ENCODE measurements at regions of chr7 and their contacts with region 1.

Region 1: GRCh38 chr7:148503875-148504487 is 86.6 kb upstream of the C7orf33 start:
- DNase-seq: no peak
- H3K4me3 Mint-ChIP-seq: no peak overlapping the region
- H3K27ac Mint-ChIP-seq: no peak overlapping the region
- H3K4me1 Mint-ChIP-seq: peaks cover 29% of the 10 kb centered on the region
- H3K27me3 Mint-ChIP-seq: peaks cover 28% of the 10 kb centered on the region

Region 2: DNA sequence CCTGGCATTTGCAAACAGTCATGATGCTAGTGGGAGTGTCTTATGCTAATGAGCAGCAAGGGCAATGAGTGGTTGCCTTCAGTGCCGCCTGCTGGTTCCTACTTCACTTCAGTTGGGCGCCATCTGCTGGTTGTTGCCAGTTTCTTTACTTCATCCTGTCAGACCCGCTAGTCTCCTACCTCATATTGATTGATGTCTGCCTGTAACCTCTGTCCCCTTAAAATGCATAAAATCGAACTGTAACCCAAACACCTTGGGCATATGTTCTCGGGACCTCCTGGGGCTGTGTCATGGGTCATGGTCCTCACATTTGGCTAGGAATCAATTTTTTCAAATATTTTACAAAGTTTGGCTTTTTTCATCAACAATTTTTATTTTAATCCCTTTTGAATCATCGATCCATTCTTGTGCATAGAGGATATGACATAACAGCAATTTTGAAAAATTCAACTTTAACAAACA is 23.8 kb after region 1 on chr7:
- CTCF ChIA-PET with region 1: interaction called, 75 read pairs
- POLR2A ChIA-PET with region 1: no interaction called
- intact Hi-C with region 1: loop called (anchors 1 kb)
- DNase-seq: peak; percentile 93
- H3K4me3 Mint-ChIP-seq: no peak overlapping the region
- H3K27ac Mint-ChIP-seq: no peak overlapping the region
- H3K4me1 Mint-ChIP-seq: peaks cover 6% of the 10 kb centered on the region
- H3K27me3 Mint-ChIP-seq: peaks cover 44% of the 10 kb centered on the region

Region 3: DNA sequence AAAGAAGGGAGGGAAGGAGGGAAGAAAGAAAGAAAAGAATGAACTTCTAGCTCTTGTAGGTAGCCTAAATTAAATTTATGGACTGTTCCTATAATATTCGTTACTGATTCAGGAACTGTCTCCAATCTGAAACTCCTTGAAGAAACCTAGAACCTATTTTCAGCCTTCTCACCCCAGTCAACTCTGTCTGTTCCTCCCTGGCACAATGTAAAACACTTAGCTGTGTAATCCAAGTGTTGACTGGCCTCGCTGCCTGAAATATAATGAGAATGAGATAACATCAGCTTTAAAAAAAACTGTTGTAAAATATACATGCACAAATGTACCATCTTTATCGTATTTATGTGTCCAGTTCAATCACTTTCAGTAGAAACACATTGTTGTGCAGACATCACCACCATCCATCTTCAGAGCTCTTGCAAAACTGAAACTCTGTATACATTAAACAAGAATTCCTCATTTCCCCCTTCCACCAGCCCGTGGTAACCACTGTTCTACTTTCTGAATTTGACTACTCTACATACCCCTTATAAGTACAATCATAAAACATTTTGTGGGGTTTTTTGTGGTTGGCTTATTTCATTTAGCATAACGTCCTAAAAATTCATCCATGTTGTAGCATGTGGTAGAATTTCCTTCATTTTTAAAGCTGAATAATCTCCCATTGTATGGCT is 80.3 kb after region 1 on chr7:
- CTCF ChIA-PET with region 1: interaction called, 6 read pairs
- POLR2A ChIA-PET with region 1: no interaction called
- intact Hi-C with region 1: loop called (anchors 1 kb)
- DNase-seq: peak; percentile 42
- H3K4me3 Mint-ChIP-seq: no peak overlapping the region
- H3K27ac Mint-ChIP-seq: no peak overlapping the region
- H3K4me1 Mint-ChIP-seq: peaks cover 17% of the 10 kb centered on the region
- H3K27me3 Mint-ChIP-seq: no peaks in the 10 kb centered on the region

Region 4: DNA sequence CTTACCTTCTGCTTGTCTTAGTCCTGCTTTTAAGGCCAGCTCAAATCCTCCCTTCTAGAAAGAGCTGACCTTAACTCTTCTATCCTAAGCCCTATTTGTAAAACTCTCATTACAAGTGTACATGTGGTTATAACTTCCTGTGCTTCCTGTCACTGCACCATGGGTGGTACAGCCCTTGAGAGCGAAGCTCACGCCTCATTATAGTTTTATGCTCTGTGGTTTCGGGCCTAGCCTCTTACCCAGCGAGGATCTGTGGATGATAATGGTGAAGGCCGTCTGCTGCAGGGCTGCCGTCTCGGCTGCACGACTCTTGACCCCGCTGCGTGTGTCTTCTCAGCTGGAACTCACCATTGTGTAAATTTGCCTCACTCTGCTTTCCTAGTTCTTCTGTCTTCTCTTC is 269.4 kb after region 1 on chr7:
- CTCF ChIA-PET with region 1: no interaction called
- POLR2A ChIA-PET with region 1: no interaction called
- intact Hi-C with region 1: loop called (anchors 5 kb)
- DNase-seq: peak; percentile 57
- H3K4me3 Mint-ChIP-seq: no peak overlapping the region
- H3K27ac Mint-ChIP-seq: peak overlapping the region; percentile 86
- H3K4me1 Mint-ChIP-seq: peaks cover 28% of the 10 kb centered on the region
- H3K27me3 Mint-ChIP-seq: no peaks in the 10 kb centered on the region

Region 5: GRCh38 chr7:148940702-148941597 is 437.0 kb after region 1 on chr7:
- CTCF ChIA-PET with region 1: no interaction called
- POLR2A ChIA-PET with region 1: interaction called, 3 read pairs
- intact Hi-C with region 1: loop called (anchors 1 kb)
- DNase-seq: peak; percentile 70
- H3K4me3 Mint-ChIP-seq: peak overlapping the region; percentile 94
- H3K27ac Mint-ChIP-seq: peak overlapping the region; percentile 94
- H3K4me1 Mint-ChIP-seq: peaks cover 14% of the 10 kb centered on the region
- H3K27me3 Mint-ChIP-seq: no peaks in the 10 kb centered on the region

Region 6: GRCh38 chr7:149028346-149029109 is 524.5 kb after region 1 on chr7 and contains the start of gene PDIA4:
- CTCF ChIA-PET with region 1: no interaction called
- POLR2A ChIA-PET with region 1: no interaction called
- intact Hi-C with region 1: loop called (anchors 1 kb)
- DNase-seq: peak; percentile 100
- H3K4me3 Mint-ChIP-seq: peak within 1 kb of the TSS; percentile 96
- H3K27ac Mint-ChIP-seq: peak within 1 kb of the TSS; percentile 88
- H3K4me1 Mint-ChIP-seq: peaks cover 33% of the 10 kb centered on the region
- H3K27me3 Mint-ChIP-seq: no peaks in the 10 kb centered on the region
- total RNA-seq, gene PDIA4: 108 to 112 TPM

Measured in activated CD4-positive, alpha-beta memory T cell treated with anti-CD3 and anti-CD28 coated beads for 36 hours (primary cell).